Aorta (tissue), 5 donors: ENCODE measurements at regions of chr10 and their contacts with region 1.

Region 1: DNA sequence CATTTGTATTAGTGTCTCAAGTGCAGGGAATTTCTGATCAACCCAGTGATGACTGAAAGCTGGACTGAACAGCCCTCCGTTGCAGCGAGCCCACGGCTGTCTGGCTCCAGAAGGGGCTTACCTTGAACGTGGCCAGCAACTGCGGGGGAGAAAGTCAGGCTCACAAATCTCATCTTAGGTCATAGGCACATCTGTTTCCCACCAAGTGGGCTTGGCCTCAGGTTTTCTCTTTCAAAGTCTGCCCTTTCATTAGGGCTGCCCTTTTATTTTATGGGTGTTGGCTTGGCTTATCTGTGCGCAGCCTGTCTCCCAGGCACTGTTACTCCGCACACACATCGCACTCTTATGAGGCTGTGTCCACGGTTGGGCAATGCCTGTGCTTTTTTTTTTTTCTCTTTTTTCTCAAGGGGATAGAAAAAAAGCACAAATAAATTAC is 178.0 kb downstream of the JCAD start:
- DNase-seq: no peak
- ATAC-seq: peak; percentile 63
- H3K4me3 ChIP-seq: no peak overlapping the region
- H3K27ac ChIP-seq: peak overlapping the region; percentile 64 to 99
- H3K4me1 ChIP-seq: peaks cover 4 to 8% of the 10 kb centered on the region in 2 donors
- H3K27me3 ChIP-seq: no peaks in the 10 kb centered on the region

Region 2: DNA sequence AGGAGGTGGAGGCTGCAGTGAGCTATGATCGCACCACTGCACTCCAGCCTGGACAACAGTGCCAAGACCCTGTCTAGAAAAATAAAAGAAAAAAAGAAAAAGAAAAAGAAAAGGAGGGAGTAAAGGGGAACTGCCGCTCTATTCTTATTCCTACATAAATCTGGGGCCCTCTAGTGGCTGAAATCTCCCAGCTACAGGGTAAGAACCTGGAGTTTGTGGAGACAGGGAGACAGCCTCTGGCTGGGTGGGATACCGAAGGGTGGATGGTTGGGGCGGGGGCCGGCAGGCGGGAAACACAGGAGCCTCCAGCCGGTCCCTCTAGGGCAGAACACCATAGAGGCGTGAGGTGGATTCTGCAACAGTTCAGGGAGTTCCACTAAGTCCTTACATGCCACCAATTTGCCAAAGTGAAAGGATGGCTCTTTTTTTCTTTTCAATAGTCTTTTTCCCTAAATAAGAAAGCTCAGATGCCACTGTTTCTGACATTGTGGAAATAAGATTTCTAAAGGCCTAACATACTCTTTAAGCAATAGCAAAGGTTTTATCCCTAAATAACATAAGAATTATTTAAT is 363.9 kb before region 1 on chr10:
- intact Hi-C with region 1: loop called in 1 of 2 experiments (anchors 10 kb)
- DNase-seq: no peak
- ATAC-seq: no peak
- H3K4me3 ChIP-seq: no peak overlapping the region
- H3K27ac ChIP-seq: no peak overlapping the region
- H3K4me1 ChIP-seq: peaks cover 0 to 2% of the 10 kb centered on the region in 2 donors
- H3K27me3 ChIP-seq: no peaks in the 10 kb centered on the region

Region 3: GRCh38 chr10:29811751-29812449 is 69.5 kb before region 1 on chr10:
- intact Hi-C with region 1: loop called in 1 of 2 experiments (anchors 5 kb)
- DNase-seq: peak in 1 of 2 donors; percentile 76
- ATAC-seq: peak; percentile 90
- H3K4me3 ChIP-seq: no peak overlapping the region
- H3K27ac ChIP-seq: peak overlapping the region; percentile 95 to 99
- H3K4me1 ChIP-seq: peaks cover 4 to 8% of the 10 kb centered on the region in 2 donors
- H3K27me3 ChIP-seq: no peaks in the 10 kb centered on the region

Region 4: GRCh38 chr10:29914986-29915785 is 33.8 kb after region 1 on chr10:
- intact Hi-C with region 1: no loop called
- DNase-seq: no peak
- ATAC-seq: no peak
- H3K4me3 ChIP-seq: no peak overlapping the region
- H3K27ac ChIP-seq: peak overlapping the region in 1 of 2 donors; percentile 12
- H3K4me1 ChIP-seq: no peaks in the 10 kb centered on the region
- H3K27me3 ChIP-seq: no peaks in the 10 kb centered on the region

Region 5: GRCh38 chr10:30134171-30134945 is 253.0 kb after region 1 on chr10:
- intact Hi-C with region 1: no loop called
- DNase-seq: no peak
- ATAC-seq: no peak
- H3K4me3 ChIP-seq: no peak overlapping the region
- H3K27ac ChIP-seq: no peak overlapping the region
- H3K4me1 ChIP-seq: no peaks in the 10 kb centered on the region
- H3K27me3 ChIP-seq: no peaks in the 10 kb centered on the region